Activated naive CD4-positive, alpha-beta T cell treated with anti-CD3 and anti-CD28 coated beads for 36 hours (primary cell): ENCODE measurements at regions of chr13 and their contacts with region 1.

Region 1: DNA sequence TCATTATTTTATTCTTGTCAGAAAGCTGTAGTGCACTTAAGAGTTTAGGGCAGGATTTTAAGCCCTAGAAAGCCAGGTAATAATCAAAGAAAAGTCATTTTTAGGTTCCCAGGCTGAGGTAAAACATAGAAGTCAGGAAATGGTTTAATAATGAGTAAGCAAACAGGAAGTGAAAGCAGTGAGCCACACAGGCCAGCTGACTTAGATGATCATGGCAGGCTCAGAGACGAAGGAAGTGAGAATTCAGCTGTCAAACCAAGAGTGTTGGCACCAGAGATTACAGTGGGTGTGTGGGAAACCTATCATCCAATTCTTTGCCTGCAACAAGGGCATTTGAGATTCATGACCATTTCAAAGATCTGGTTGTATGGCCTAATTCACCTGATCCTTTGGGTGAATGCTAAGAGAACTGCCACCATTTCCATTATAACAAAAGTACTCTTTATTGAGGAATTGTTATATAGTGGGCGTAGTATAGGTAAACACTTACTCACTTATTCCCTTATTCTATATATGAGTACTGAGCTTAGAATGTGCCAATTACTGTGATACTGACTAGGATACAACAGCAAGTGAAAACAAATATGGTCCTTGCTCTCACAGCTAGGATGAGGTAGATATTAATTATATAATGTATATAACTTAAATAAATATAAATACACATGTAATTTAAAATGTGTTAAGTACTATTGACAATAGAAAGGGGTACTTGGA is 103.7 kb upstream of the EDNRB start:
- DNase-seq: peak; percentile 73
- H3K4me3 Mint-ChIP-seq: no peak overlapping the region
- H3K27ac Mint-ChIP-seq: no peak overlapping the region
- H3K4me1 Mint-ChIP-seq: peaks cover 6% of the 10 kb centered on the region
- H3K27me3 Mint-ChIP-seq: peaks cover 2% of the 10 kb centered on the region

Region 2: GRCh38 chr13:77729502-77730221 is 292.7 kb before region 1 on chr13:
- CTCF ChIA-PET with region 1: no interaction called
- intact Hi-C with region 1: loop called (anchors 1 kb)
- DNase-seq: peak; percentile 69
- H3K4me3 Mint-ChIP-seq: no peak overlapping the region
- H3K27ac Mint-ChIP-seq: peak overlapping the region; percentile 57
- H3K4me1 Mint-ChIP-seq: peaks cover 31% of the 10 kb centered on the region
- H3K27me3 Mint-ChIP-seq: no peaks in the 10 kb centered on the region

Region 3: GRCh38 chr13:77779552-77780272 is 242.6 kb before region 1 on chr13:
- CTCF ChIA-PET with region 1: no interaction called
- intact Hi-C with region 1: loop called (anchors 10 kb)
- DNase-seq: peak; percentile 61
- H3K4me3 Mint-ChIP-seq: no peak overlapping the region
- H3K27ac Mint-ChIP-seq: peak overlapping the region; percentile 57
- H3K4me1 Mint-ChIP-seq: peaks cover 12% of the 10 kb centered on the region
- H3K27me3 Mint-ChIP-seq: peaks cover 10% of the 10 kb centered on the region

Region 4: DNA sequence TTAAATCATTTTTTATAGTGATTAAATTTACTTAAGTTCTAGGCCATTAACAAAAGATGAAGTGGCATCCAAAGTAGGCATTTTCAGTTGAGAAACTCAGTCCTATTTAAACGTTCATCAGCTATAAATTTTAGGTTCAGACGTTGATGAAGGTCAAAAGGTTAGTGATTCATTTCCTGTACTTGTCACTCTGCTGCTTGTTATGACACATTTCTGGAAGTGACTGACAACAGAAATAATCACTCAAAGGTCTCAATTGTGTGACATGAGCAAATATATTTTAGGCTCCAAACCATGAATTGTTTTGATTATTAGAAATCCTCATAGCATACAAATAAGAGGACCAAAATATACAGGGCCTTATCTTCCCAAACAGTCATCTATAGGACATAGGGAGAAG is 93.4 kb before region 1 on chr13:
- CTCF ChIA-PET with region 1: no interaction called
- intact Hi-C with region 1: loop called (anchors 1 kb)
- DNase-seq: no peak
- H3K4me3 Mint-ChIP-seq: no peak overlapping the region
- H3K27ac Mint-ChIP-seq: no peak overlapping the region
- H3K4me1 Mint-ChIP-seq: peaks cover 2% of the 10 kb centered on the region
- H3K27me3 Mint-ChIP-seq: peaks cover 20% of the 10 kb centered on the region

Region 5: DNA sequence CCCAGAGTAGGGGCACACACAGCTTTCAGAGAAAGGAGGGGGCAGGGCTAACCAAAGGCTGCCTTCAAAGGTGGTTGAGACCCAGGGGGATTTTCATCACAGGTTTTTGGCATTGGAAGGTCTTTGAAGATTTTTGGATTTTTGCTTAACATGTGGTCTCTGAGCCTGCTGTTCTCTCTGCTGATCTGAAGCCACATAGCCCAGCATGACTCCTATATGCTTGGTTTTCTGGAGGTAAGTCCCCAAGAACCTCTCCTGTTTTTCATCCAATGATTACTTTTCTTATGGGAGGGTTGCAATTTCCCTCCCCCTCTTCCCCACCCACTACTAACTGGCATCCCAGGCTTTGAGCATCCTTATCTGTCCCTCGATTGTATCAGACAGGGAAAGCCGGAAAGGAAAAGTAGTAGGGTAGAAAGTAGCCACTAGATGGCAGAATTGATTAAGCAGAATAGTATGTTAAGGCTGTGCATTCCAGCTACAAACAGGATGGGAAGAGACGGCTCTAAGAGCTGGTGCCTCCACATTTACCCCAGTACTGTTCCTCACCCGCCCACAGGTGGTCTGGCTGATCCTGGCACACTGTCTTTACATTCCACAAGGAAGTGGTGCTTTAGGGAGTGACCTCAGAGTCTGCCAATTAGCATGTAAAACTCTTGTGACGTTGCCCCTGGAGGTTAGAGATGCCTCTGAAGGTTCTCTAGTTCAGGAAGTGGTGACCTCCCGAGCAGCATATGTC is 115.3 kb after region 1 on chr13:
- CTCF ChIA-PET with region 1: no interaction called
- intact Hi-C with region 1: no loop called
- DNase-seq: peak; percentile 8
- H3K4me3 Mint-ChIP-seq: peak overlapping the region; percentile 21
- H3K27ac Mint-ChIP-seq: no peak overlapping the region
- H3K4me1 Mint-ChIP-seq: peaks cover 6% of the 10 kb centered on the region
- H3K27me3 Mint-ChIP-seq: peaks cover 3% of the 10 kb centered on the region

Region 6: DNA sequence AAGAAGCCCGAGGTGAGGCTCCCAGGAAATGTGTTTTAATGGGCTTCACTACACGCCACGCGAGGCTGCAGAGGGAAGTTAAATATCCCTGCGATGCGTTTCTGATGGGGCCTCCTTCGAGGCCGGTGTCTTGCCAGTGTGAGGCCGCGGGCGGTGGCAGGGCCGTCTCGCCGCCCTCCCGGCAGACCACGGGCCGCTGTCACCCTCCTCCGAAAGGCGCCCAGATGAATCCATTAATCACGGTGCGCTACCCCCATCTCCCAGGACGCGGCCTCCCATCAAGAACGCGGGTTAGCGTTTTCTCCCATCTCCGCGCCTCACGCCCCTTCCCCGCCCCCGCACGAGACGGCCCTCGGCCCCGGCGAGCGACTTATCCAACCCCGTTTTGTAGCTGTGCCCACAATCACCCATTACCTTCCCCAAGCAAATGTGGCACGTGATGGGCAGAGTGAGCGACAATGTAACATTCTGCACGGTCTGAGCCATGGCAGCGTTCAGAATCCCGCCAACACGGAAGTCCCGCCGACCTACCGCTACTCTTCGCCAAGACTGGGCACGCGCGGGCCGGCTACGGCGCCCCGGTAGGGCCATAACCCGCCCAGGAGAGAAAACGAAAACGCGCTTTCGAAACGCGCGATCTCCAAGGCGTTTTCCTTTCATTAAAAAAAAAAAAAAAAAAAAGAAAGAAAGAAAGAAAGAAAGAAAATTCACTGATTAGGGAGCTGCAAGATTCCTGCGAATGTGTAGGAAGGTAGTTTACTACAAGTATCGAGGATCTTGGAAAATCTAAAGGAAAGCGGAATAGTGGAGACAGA is 636.5 kb after region 1 on chr13 and contains the start of gene OBI1:
- CTCF ChIA-PET with region 1: no interaction called
- intact Hi-C with region 1: loop called (anchors 10 kb)
- DNase-seq: peak; percentile 90
- H3K4me3 Mint-ChIP-seq: peak within 1 kb of the TSS; percentile 100
- H3K27ac Mint-ChIP-seq: peak within 1 kb of the TSS; percentile 96
- H3K4me1 Mint-ChIP-seq: peaks cover 35% of the 10 kb centered on the region
- H3K27me3 Mint-ChIP-seq: no peaks in the 10 kb centered on the region
- total RNA-seq, gene OBI1: 16.0 to 17.7 TPM

Region 7: GRCh38 chr13:79194272-79194671 is 1172.0 kb after region 1 on chr13:
- CTCF ChIA-PET with region 1: no interaction called
- intact Hi-C with region 1: loop called (anchors 5 kb)
- DNase-seq: peak; percentile 76
- H3K4me3 Mint-ChIP-seq: no peak overlapping the region
- H3K27ac Mint-ChIP-seq: no peak overlapping the region
- H3K4me1 Mint-ChIP-seq: peaks cover 40% of the 10 kb centered on the region
- H3K27me3 Mint-ChIP-seq: no peaks in the 10 kb centered on the region